Activated CD4-positive, alpha-beta memory T cell treated with anti-CD3 and anti-CD28 coated beads for 36 hours (primary cell): ENCODE measurements at regions of chr2 and their contacts with region 1.

Region 1: DNA sequence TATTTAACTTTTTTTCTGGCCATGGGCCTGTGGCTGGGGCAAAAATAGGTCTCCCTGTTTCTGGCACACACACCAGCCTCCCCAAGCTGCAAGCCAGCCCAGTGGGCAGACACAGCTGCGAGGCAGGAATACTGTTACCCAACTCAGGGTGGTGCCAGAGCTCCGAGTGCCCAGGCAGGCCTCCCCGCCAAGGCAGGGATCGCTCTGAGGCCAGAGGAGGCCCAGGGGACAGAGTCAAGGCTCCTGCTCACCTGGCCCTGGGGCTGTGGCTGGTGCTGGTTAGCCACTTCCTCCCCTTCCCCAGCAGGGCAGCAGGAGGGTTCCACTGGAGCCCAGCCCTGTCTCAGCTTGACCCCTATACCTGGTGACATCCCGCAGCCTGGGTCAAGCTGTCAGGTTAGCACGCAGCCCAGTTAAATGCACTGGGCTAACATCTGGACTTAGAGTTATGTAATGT is 67.1 kb upstream of the EPAS1 start:
- DNase-seq: peak; percentile 50
- H3K4me3 Mint-ChIP-seq: peak overlapping the region; percentile 16
- H3K27ac Mint-ChIP-seq: peak overlapping the region; percentile 92
- H3K4me1 Mint-ChIP-seq: peaks cover 51% of the 10 kb centered on the region
- H3K27me3 Mint-ChIP-seq: no peaks in the 10 kb centered on the region

Region 2: DNA sequence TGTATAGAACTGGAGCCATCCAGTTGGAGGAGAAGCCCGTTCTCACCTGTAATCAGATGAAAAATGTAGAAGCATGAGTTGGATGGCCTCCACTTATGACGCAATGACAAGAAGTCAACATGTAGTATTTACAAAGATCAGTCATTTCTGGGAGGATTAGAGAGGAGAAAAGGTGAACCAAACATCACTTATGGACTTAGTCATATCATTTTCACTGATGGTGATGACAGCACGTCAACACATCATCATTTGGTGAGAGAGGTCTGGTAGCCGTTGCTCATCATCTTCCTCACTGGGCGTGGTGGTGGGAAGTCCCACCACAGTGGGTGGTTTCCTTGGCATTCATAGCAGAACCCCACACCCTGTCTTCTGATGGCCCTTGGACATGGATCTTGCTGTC is 197.1 kb before region 1 on chr2:
- CTCF ChIA-PET with region 1: no interaction called
- POLR2A ChIA-PET with region 1: no interaction called
- intact Hi-C with region 1: loop called (anchors 2 kb)
- DNase-seq: peak; percentile 88
- H3K4me3 Mint-ChIP-seq: no peak overlapping the region
- H3K27ac Mint-ChIP-seq: peak overlapping the region; percentile 76
- H3K4me1 Mint-ChIP-seq: peaks cover 28% of the 10 kb centered on the region
- H3K27me3 Mint-ChIP-seq: no peaks in the 10 kb centered on the region

Region 3: DNA sequence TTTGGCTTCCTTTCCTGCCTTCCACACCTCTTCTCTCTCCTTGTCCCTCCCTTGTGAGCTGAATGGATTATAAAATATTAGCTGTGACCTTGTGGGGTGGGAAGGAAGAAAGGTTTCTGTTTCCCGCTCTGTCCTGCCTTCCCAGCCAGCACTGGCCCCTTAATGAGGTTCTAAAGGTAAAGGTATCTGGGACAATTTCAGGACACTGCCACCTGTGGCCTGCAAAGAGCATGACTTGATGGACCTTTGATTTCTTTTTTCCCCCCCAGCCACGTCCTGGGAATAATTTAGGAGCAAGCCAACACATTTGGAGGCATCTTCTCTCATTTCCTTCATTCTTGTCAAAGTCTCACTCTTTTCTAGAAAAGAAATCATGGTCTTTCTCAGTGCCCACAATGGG is 179.7 kb before region 1 on chr2:
- CTCF ChIA-PET with region 1: no interaction called
- POLR2A ChIA-PET with region 1: no interaction called
- intact Hi-C with region 1: no loop called
- DNase-seq: no peak
- H3K4me3 Mint-ChIP-seq: no peak overlapping the region
- H3K27ac Mint-ChIP-seq: peak overlapping the region; percentile 33
- H3K4me1 Mint-ChIP-seq: peaks cover 28% of the 10 kb centered on the region
- H3K27me3 Mint-ChIP-seq: no peaks in the 10 kb centered on the region

Region 4: DNA sequence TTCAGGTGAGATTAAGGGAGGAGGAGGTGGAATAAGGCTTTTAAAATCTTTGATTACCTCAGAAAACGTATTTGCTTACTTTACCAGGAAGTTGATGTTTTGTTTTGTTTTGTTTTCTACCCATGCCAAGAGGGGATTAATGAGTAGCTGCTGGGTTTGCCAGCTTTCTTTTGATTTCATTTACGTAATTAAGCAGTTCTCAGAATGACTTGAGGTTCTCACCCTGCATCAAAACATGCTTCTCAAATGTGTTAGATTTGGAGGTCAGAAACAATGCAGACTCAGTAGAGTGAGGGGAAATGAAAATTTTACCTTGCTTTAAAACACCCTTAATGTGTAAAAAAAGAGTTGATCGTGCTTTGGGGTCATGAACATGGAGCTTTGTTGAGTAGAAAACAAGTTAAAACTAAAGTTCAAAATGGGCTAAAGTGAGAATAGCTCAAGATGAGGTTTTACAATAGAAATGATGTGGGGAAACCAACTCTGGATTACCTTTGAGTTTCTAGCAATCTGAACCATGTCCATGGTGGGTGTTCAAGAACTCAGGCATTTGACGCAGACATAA is 150.1 kb before region 1 on chr2:
- CTCF ChIA-PET with region 1: no interaction called
- POLR2A ChIA-PET with region 1: no interaction called
- intact Hi-C with region 1: loop called (anchors 1 kb)
- DNase-seq: no peak
- H3K4me3 Mint-ChIP-seq: no peak overlapping the region
- H3K27ac Mint-ChIP-seq: peak overlapping the region; percentile 86
- H3K4me1 Mint-ChIP-seq: peaks cover 36% of the 10 kb centered on the region
- H3K27me3 Mint-ChIP-seq: no peaks in the 10 kb centered on the region

Region 5: GRCh38 chr2:46187112-46187618 is 43.0 kb before region 1 on chr2:
- CTCF ChIA-PET with region 1: interaction called, 6 read pairs
- POLR2A ChIA-PET with region 1: interaction called, 4 read pairs
- intact Hi-C with region 1: loop called (anchors 2 kb)
- DNase-seq: peak; percentile 67
- H3K4me3 Mint-ChIP-seq: no peak overlapping the region
- H3K27ac Mint-ChIP-seq: peak overlapping the region; percentile 84
- H3K4me1 Mint-ChIP-seq: peaks cover 13% of the 10 kb centered on the region
- H3K27me3 Mint-ChIP-seq: no peaks in the 10 kb centered on the region

Region 6: DNA sequence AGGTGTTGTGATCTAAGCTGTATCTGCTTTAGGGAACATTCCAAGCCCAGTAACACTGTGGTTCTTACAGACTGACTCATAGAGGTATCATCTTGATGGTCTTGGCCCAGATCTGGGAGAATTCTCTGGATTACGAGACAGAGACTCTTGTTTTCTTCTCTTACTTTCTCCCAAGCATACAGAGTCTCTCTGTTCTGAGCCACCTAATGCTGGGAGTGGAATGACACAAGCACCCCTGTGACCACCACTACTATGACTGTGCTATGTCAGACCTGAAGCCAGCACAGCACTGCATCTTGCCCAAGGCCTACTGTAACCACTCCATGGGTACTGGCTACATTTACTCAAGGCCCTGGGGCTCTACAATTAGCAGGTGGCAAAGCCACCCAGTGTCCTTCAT is 13.9 kb before region 1 on chr2:
- CTCF ChIA-PET with region 1: no interaction called
- POLR2A ChIA-PET with region 1: no interaction called
- intact Hi-C with region 1: no loop called
- DNase-seq: no peak
- H3K4me3 Mint-ChIP-seq: no peak overlapping the region
- H3K27ac Mint-ChIP-seq: no peak overlapping the region
- H3K4me1 Mint-ChIP-seq: no peaks in the 10 kb centered on the region
- H3K27me3 Mint-ChIP-seq: peaks cover 8% of the 10 kb centered on the region

Region 7: GRCh38 chr2:46257476-46257875 is 27.3 kb after region 1 on chr2:
- CTCF ChIA-PET with region 1: no interaction called
- POLR2A ChIA-PET with region 1: no interaction called
- intact Hi-C with region 1: no loop called
- DNase-seq: no peak
- H3K4me3 Mint-ChIP-seq: no peak overlapping the region
- H3K27ac Mint-ChIP-seq: no peak overlapping the region
- H3K4me1 Mint-ChIP-seq: no peaks in the 10 kb centered on the region
- H3K27me3 Mint-ChIP-seq: no peaks in the 10 kb centered on the region